Activated naive CD4-positive, alpha-beta T cell treated with anti-CD3 and anti-CD28 coated beads for 36 hours (primary cell): ENCODE measurements at regions of chr11 and their contacts with region 1.

Region 1: GRCh38 chr11:15074206-15075161 is 1.1 kb downstream of the CALCB start:
- DNase-seq: peak; percentile 94
- H3K4me3 Mint-ChIP-seq: peak overlapping the region; percentile 86
- H3K27ac Mint-ChIP-seq: peak overlapping the region; percentile 43
- H3K4me1 Mint-ChIP-seq: peaks cover 10% of the 10 kb centered on the region
- H3K27me3 Mint-ChIP-seq: peaks cover 9% of the 10 kb centered on the region

Region 2: DNA sequence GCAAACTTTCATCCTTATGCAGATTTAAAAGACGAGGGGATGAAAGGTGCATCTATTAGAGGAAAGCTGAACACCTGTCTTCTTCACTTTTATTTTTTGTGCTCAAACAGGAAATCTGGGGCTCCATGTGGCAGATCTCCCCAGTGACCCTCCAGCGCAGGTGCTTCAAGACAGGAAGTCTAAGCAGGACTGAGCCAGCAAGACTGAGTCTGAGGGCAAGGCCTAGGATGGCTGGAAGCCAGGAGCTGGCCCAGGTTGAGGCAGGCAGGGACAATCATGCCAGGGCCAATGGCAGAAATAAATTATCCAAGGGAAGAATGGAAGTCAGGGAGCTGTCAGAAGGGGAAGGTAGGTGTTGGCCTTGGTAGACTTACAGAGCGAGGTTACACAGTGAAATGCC is 1213.1 kb before region 1 on chr11:
- CTCF ChIA-PET with region 1: no interaction called
- intact Hi-C with region 1: no loop called
- DNase-seq: peak; percentile 45
- H3K4me3 Mint-ChIP-seq: no peak overlapping the region
- H3K27ac Mint-ChIP-seq: peak overlapping the region; percentile 43
- H3K4me1 Mint-ChIP-seq: peaks cover 34% of the 10 kb centered on the region
- H3K27me3 Mint-ChIP-seq: no peaks in the 10 kb centered on the region

Region 3: GRCh38 chr11:14519917-14520746 is 554.4 kb before region 1 on chr11 and contains the start of gene PSMA1:
- CTCF ChIA-PET with region 1: no interaction called
- intact Hi-C with region 1: loop called (anchors 1 kb)
- DNase-seq: peak; percentile 98
- H3K4me3 Mint-ChIP-seq: peak within 1 kb of the TSS; percentile 96
- H3K27ac Mint-ChIP-seq: peak within 1 kb of the TSS; percentile 97
- H3K4me1 Mint-ChIP-seq: peaks cover 24% of the 10 kb centered on the region
- H3K27me3 Mint-ChIP-seq: no peaks in the 10 kb centered on the region
- total RNA-seq, gene PSMA1: 367 to 375 TPM

Region 4: GRCh38 chr11:14974515-14975251 is 99.8 kb before region 1 on chr11:
- CTCF ChIA-PET with region 1: interaction called, 89 read pairs
- intact Hi-C with region 1: loop called (anchors 1 kb)
- DNase-seq: peak; percentile 83
- H3K4me3 Mint-ChIP-seq: peak overlapping the region; percentile 69
- H3K27ac Mint-ChIP-seq: no peak overlapping the region
- H3K4me1 Mint-ChIP-seq: peaks cover 33% of the 10 kb centered on the region
- H3K27me3 Mint-ChIP-seq: peaks cover 61% of the 10 kb centered on the region

Region 5: GRCh38 chr11:15038963-15039362 is 35.5 kb before region 1 on chr11:
- CTCF ChIA-PET with region 1: interaction called, 73 read pairs
- intact Hi-C with region 1: loop called (anchors 1 kb)
- DNase-seq: peak; percentile 57
- H3K4me3 Mint-ChIP-seq: no peak overlapping the region
- H3K27ac Mint-ChIP-seq: no peak overlapping the region
- H3K4me1 Mint-ChIP-seq: no peaks in the 10 kb centered on the region
- H3K27me3 Mint-ChIP-seq: no peaks in the 10 kb centered on the region

Region 6: GRCh38 chr11:15059132-15059915 is 15.2 kb before region 1 on chr11:
- CTCF ChIA-PET with region 1: interaction called, 24 read pairs
- intact Hi-C with region 1: no loop called
- DNase-seq: peak; percentile 50
- H3K4me3 Mint-ChIP-seq: no peak overlapping the region
- H3K27ac Mint-ChIP-seq: peak overlapping the region; percentile 67
- H3K4me1 Mint-ChIP-seq: peaks cover 23% of the 10 kb centered on the region
- H3K27me3 Mint-ChIP-seq: peaks cover 7% of the 10 kb centered on the region

Region 7: GRCh38 chr11:15208378-15209222 is 134.1 kb after region 1 on chr11:
- CTCF ChIA-PET with region 1: interaction called, 7 read pairs
- intact Hi-C with region 1: loop called (anchors 1 kb)
- DNase-seq: peak; percentile 84
- H3K4me3 Mint-ChIP-seq: no peak overlapping the region
- H3K27ac Mint-ChIP-seq: no peak overlapping the region
- H3K4me1 Mint-ChIP-seq: no peaks in the 10 kb centered on the region
- H3K27me3 Mint-ChIP-seq: no peaks in the 10 kb centered on the region